ENCODE measurements at regions of chr1 and their contacts with region 1.

Region 1: GRCh38 chr1:214584805-214585766 is 17.9 kb upstream of the CENPF start:
- DNase-seq: no peak
- ATAC-seq: peak; percentile 55 to 86 (median 78)
- H3K4me3 ChIP-seq: no peak overlapping the region
- H3K27ac ChIP-seq: no peak overlapping the region
- H3K4me1 ChIP-seq: peaks cover 0 to 4% (median 0%) of the 10 kb centered on the region in 12 donors
- H3K27me3 ChIP-seq: no peaks in the 10 kb centered on the region
- CTCF ChIP-seq: peak; percentile 51 to 84 (median 74)
- POLR2A ChIP-seq: no peak

Region 2: GRCh38 chr1:214205053-214205452 is 380.0 kb before region 1 on chr1:
- intact Hi-C with region 1: loop called (anchors 5 to 10 kb)
- DNase-seq: no peak
- ATAC-seq: no peak
- H3K4me3 ChIP-seq: no peak overlapping the region
- H3K27ac ChIP-seq: no peak overlapping the region
- H3K4me1 ChIP-seq: no peaks in the 10 kb centered on the region
- H3K27me3 ChIP-seq: peaks cover 0 to 7% (median 0%) of the 10 kb centered on the region in 9 donors
- CTCF ChIP-seq: no peak
- POLR2A ChIP-seq: no peak

Region 3: GRCh38 chr1:214261206-214262123 is 323.6 kb before region 1 on chr1:
- intact Hi-C with region 1: loop called in 7 of 10 experiments (anchors 5 to 10 kb)
- DNase-seq: peak; percentile 85 to 91 (median 89)
- ATAC-seq: peak; percentile 95 to 98 (median 97)
- H3K4me3 ChIP-seq: no peak overlapping the region
- H3K27ac ChIP-seq: peak overlapping the region in 10 of 12 donors; percentile 40 to 86 (median 68)
- H3K4me1 ChIP-seq: peaks cover 0 to 20% (median 5%) of the 10 kb centered on the region in 12 donors
- H3K27me3 ChIP-seq: peaks cover 0 to 56% (median 6%) of the 10 kb centered on the region in 9 donors
- CTCF ChIP-seq: peak; percentile 93 to 99 (median 97)
- POLR2A ChIP-seq: no peak

Region 4: GRCh38 chr1:214341932-214342331 is 243.2 kb before region 1 on chr1:
- intact Hi-C with region 1: no loop called
- DNase-seq: no peak
- ATAC-seq: no peak
- H3K4me3 ChIP-seq: no peak overlapping the region
- H3K27ac ChIP-seq: peak overlapping the region in 4 of 12 donors; percentile 20 to 78 (median 53)
- H3K4me1 ChIP-seq: peaks cover 0 to 34% (median 9%) of the 10 kb centered on the region in 12 donors
- H3K27me3 ChIP-seq: no peaks in the 10 kb centered on the region
- CTCF ChIP-seq: no peak
- POLR2A ChIP-seq: no peak

Region 5: DNA sequence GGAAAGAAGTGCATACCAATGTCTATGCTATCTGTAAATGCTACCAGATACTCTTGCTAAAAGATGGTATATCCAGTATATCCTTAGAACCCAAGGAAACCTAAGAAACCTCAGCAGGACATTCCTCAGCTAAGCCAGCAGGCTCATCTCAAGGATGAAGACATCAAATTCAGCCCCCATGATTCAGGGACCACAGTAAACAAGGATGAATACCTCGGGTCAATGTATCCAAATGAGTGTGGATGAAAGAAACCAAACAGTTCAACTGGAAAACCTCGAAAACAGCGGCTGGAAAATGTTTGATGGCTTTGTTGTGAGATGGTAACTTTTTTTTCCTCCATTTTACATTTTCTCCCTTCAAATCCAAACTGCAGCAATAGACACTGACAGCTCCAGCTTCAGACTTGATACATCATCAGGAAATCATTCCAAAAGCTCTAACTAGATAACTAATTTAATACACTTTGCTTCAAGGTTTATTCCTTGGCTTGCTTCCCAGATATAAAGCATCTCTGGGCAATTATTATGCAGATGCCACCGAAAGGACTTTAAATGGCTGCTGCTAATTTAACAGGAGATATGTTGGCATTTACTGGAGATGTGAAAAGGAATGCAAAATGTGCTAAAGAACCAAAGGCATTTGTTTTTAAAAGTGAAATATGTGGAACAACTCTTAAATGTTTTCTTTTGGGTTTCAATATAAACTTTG is 230.5 kb before region 1 on chr1:
- intact Hi-C with region 1: no loop called
- DNase-seq: no peak
- ATAC-seq: no peak
- H3K4me3 ChIP-seq: no peak overlapping the region
- H3K27ac ChIP-seq: no peak overlapping the region
- H3K4me1 ChIP-seq: peaks cover 0 to 24% (median 10%) of the 10 kb centered on the region in 12 donors
- H3K27me3 ChIP-seq: no peaks in the 10 kb centered on the region
- CTCF ChIP-seq: no peak
- POLR2A ChIP-seq: no peak

Region 6: DNA sequence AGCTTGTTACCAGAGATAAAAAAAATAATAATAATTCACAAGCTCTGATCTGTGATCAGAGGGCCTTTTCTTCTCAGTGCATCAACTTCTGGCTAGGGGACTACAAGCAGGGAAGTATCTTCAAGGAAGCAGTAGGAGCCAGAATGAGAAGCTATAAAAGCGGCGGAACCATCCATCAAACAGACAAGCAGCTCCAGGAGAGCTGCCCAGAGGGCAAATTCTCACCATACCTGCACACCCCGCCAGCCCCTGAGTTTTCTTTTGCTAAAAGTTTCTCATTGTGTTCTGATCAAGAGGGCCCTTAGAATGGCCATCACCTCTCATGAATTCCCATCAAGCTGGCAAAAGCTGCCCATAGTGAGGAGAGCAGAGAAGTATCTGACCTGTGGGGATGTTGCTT is 204.7 kb before region 1 on chr1:
- intact Hi-C with region 1: loop called in 9 of 10 experiments (anchors 5 to 10 kb)
- DNase-seq: no peak
- ATAC-seq: no peak
- H3K4me3 ChIP-seq: no peak overlapping the region
- H3K27ac ChIP-seq: no peak overlapping the region
- H3K4me1 ChIP-seq: no peaks in the 10 kb centered on the region
- H3K27me3 ChIP-seq: no peaks in the 10 kb centered on the region
- CTCF ChIP-seq: no peak
- POLR2A ChIP-seq: no peak

Region 7: GRCh38 chr1:214386747-214387146 is 198.3 kb before region 1 on chr1:
- intact Hi-C with region 1: loop called (anchors 2 to 10 kb)
- DNase-seq: no peak
- ATAC-seq: no peak
- H3K4me3 ChIP-seq: no peak overlapping the region
- H3K27ac ChIP-seq: no peak overlapping the region
- H3K4me1 ChIP-seq: no peaks in the 10 kb centered on the region
- H3K27me3 ChIP-seq: no peaks in the 10 kb centered on the region
- CTCF ChIP-seq: no peak
- POLR2A ChIP-seq: no peak

Region 8: GRCh38 chr1:214880956-214881355 is 295.9 kb after region 1 on chr1:
- intact Hi-C with region 1: no loop called
- DNase-seq: no peak
- ATAC-seq: no peak
- H3K4me3 ChIP-seq: no peak overlapping the region
- H3K27ac ChIP-seq: no peak overlapping the region
- H3K4me1 ChIP-seq: no peaks in the 10 kb centered on the region
- H3K27me3 ChIP-seq: no peaks in the 10 kb centered on the region
- CTCF ChIP-seq: no peak
- POLR2A ChIP-seq: no peak